ENCODE measurements at regions of chr1 and their contacts with region 1.

Region 1: GRCh38 chr1:64136752-64137411 is 66.5 kb upstream of the UBE2U start:
- DNase-seq: peak; percentile 74
- H3K4me3 ChIP-seq: no peak overlapping the region
- CTCF ChIP-seq: peak; percentile 80

Region 2: DNA sequence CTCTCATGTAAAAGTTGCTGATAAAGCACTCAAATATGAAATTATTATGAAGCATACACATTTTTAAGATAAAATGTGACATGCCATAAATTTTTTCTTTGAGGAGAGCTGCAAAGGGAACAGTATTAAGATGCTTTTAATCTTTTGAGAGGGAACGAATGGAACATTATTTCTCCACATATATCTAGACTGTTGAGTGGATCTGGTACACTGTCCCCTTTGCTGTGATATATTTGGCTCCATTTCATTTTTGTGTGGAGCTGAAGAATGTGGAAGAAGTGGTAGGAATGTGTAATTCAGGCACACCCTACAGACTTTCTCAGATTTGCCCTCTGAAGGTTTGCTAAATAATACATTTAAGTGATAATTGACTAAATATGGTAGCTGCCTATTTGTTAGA is 512.0 kb before region 1 on chr1:
- CTCF ChIA-PET with region 1: interaction called, 16 read pairs
- POLR2A ChIA-PET with region 1: no interaction called
- DNase-seq: no peak
- H3K4me3 ChIP-seq: no peak overlapping the region
- CTCF ChIP-seq: peak; percentile 15

Region 3: GRCh38 chr1:63691701-63692425 is 445.0 kb before region 1 on chr1:
- CTCF ChIA-PET with region 1: interaction called, 47 read pairs
- POLR2A ChIA-PET with region 1: no interaction called
- DNase-seq: peak; percentile 77
- H3K4me3 ChIP-seq: no peak overlapping the region
- CTCF ChIP-seq: peak; percentile 67

Region 4: GRCh38 chr1:63917571-63918417 is 219.1 kb before region 1 on chr1:
- CTCF ChIA-PET with region 1: interaction called, 74 read pairs
- POLR2A ChIA-PET with region 1: interaction called, 5 read pairs
- DNase-seq: no peak
- H3K4me3 ChIP-seq: no peak overlapping the region
- CTCF ChIP-seq: no peak

Region 5: DNA sequence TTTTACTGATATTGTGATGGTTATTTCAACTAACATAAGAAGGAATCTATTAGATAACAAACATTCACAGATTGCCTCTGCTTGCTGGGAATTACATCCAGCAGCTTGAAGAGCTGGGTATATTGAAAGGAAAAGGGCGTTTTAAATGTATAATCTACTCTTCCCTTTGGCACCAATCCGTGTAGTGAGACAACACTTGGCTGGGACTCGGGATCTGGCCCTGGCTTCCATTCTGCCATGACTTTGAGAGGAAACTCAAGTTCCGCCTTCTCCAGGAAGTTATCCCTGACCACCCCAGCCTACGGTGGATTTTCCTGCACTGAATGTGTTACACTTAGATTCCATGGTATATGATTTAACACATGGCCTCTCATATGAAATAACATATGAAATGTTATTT is 20.3 kb before region 1 on chr1:
- CTCF ChIA-PET with region 1: interaction called, 14 read pairs
- POLR2A ChIA-PET with region 1: no interaction called
- DNase-seq: no peak
- H3K4me3 ChIP-seq: no peak overlapping the region
- CTCF ChIP-seq: no peak

Region 6: GRCh38 chr1:64147759-64148158 is 10.9 kb after region 1 on chr1:
- CTCF ChIA-PET with region 1: interaction called, 61 read pairs
- POLR2A ChIA-PET with region 1: interaction called, 3 read pairs
- DNase-seq: no peak
- H3K4me3 ChIP-seq: no peak overlapping the region
- CTCF ChIP-seq: no peak

Region 7: DNA sequence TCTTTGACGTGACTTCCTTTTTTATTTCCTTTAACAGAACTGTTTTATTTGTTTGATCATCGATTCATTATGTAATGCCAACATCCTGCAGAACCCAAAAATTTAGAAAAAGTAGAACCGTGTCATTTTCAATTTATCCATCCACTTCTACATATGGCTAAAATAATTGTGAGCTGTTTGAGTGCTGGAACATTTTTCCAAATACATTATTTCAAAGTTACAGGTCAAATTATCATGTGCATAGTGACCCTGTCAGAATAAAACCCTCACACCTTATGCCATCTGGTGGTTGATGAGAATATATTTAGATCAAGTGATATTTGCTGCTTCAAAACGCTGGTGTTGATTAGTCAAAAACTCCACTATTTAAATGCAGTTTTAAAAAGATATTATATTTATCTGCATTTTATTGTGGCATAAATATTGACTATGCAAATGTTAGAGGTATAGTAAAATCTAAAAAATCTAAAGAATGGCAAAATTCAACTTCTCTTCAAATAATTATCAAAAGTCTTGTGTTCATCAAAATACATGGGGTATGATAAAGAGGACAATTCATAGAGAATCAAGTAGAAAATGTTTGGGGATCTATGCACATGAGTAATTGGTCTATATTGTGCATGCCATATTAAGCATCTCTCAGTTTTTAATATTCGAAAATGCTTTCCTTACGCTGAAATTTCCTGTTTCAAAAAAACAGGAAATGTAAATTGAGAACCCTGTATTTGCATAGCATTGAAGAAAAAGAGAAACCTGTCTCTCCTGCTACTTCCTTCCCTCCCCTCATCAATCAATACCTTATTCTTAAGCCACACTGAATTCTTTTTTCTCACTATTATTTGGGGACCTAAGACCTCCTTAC is 106.2 kb after region 1 on chr1:
- CTCF ChIA-PET with region 1: interaction called, 16 read pairs
- POLR2A ChIA-PET with region 1: no interaction called
- DNase-seq: no peak
- H3K4me3 ChIP-seq: no peak overlapping the region
- CTCF ChIP-seq: peak; percentile 20

Region 8: GRCh38 chr1:64308866-64309265 is 172.0 kb after region 1 on chr1:
- CTCF ChIA-PET with region 1: no interaction called
- POLR2A ChIA-PET with region 1: no interaction called
- DNase-seq: no peak
- H3K4me3 ChIP-seq: no peak overlapping the region
- CTCF ChIP-seq: no peak

Measured in AG04449 (cell line).